Dendritic cell treated with granulocyte-macrophage colony-stimulating factor and Interleukin-4, amounts not matched to agents 40 ng/mL and 50 ng/mL, for 4 days (primary cell): ENCODE measurements at regions of chr10 and their contacts with region 1.

Region 1: DNA sequence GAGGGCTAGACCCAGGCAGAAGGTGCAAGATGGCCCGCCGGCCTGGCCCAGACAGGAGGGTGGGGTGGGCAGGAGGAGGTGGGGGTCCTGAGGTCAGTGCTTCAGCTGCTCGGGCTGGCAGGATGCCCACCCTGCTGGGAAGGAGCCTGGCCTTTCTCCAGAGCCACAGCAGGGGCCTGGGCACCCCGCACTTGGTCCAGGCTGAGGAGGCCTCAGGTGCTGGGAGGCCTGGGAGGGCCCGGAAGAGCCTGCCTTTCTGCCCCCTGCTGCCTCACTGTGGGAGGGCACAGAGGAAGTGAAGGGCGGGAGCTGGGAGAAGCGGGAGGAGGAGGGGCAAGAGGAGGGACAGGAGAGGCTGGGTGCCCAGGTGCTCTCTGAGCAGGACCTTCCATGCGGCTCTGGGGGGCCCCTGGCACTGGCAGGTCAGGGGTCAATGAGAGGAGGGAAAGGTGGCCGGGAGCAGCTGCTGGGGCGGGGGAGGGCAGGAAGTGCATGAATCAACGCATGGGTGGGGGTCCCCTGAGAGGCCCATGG is 49.7 kb downstream of the PWWP2B start:
- H3K4me3 Mint-ChIP-seq: peak overlapping the region; percentile 58
- H3K27ac Mint-ChIP-seq: peak overlapping the region; percentile 86
- H3K4me1 Mint-ChIP-seq: peaks cover 73% of the 10 kb centered on the region
- H3K27me3 Mint-ChIP-seq: no peaks in the 10 kb centered on the region

Region 2: DNA sequence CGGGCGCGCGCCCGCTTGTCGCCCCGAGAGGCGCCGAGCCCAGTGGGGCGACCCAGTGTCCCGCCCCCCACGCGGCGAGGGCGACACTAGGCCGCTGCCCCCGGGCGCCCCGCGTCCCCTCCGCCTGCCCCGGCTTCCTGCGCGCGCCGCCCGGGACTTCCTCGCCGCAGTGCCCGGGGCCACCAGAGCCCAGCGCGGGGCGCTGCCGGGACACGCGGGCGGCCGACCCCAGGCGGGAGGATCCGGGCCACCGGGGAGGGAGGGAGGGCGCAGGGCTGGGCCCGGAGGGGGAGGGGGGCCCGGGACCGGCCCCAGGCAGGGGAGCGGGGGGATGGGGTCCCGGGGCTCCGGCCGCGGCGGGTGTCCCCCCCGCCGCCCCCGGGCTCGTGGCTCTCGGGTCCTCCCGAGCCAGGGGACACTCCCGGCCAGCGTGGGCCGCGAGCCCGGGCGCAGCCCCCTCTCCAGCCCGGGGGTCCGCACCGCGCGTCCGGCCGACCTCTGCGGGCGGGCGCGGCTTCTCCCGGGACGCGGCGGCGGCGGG is 50.2 kb before region 1 on chr10:
- intact Hi-C with region 1: loop called (anchors 2 kb)
- H3K4me3 Mint-ChIP-seq: peak overlapping the region; percentile 33
- H3K27ac Mint-ChIP-seq: peak overlapping the region; percentile 82
- H3K4me1 Mint-ChIP-seq: peaks cover 69% of the 10 kb centered on the region
- H3K27me3 Mint-ChIP-seq: peaks cover 7% of the 10 kb centered on the region